ENCODE measurements at regions of chrX and their contacts with region 1.

Region 1: DNA sequence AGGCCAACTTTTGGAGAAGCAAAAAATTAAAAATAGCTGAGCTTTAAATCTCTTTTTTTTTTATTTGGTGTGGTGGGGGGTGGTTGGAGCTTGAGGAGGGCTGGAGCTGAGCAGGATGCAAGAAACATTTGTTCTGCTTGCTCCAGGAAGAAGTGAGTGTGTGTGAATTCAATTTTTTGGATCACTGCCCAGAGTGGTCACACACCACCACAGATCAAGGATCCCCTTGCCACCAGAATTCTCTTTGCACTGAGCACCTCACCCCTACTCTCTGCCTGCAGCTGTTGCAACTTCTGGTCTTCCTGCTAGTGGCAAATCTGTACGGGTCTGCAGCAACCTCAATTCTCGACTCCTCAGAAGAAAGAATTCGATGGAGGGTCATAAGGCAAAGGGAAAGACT is 19.9 kb upstream of the PLP1 start:
- DNase-seq: no peak
- ATAC-seq: no peak
- H3K4me3 Mint-ChIP-seq: no peak overlapping the region
- H3K27ac Mint-ChIP-seq: no peak overlapping the region
- H3K4me1 Mint-ChIP-seq: peaks cover 72% of the 10 kb centered on the region
- H3K27me3 Mint-ChIP-seq: no peaks in the 10 kb centered on the region
- CTCF ChIP-seq: no peak

Region 2: GRCh38 chrX:103554687-103555424 is 201.9 kb before region 1 on chrX:
- CTCF ChIA-PET with region 1: no interaction called
- POLR2A ChIA-PET with region 1: no interaction called
- DNase-seq: peak; percentile 78
- ATAC-seq: peak; percentile 94
- H3K4me3 Mint-ChIP-seq: peak overlapping the region; percentile 95
- H3K27ac Mint-ChIP-seq: peak overlapping the region; percentile 95
- H3K4me1 Mint-ChIP-seq: no peaks in the 10 kb centered on the region
- H3K27me3 Mint-ChIP-seq: no peaks in the 10 kb centered on the region
- CTCF ChIP-seq: no peak

Region 3: GRCh38 chrX:104205548-104205947 is 448.8 kb after region 1 on chrX:
- CTCF ChIA-PET with region 1: no interaction called
- POLR2A ChIA-PET with region 1: interaction called, 12 read pairs
- DNase-seq: no peak
- ATAC-seq: no peak
- H3K4me3 Mint-ChIP-seq: no peak overlapping the region
- H3K27ac Mint-ChIP-seq: no peak overlapping the region
- H3K4me1 Mint-ChIP-seq: no peaks in the 10 kb centered on the region
- H3K27me3 Mint-ChIP-seq: peaks cover 9% of the 10 kb centered on the region
- CTCF ChIP-seq: no peak

Measured in WTC11 (cell line).